BJ (cell line): ENCODE measurements at regions of chr12 and their contacts with region 1.

Region 1: DNA sequence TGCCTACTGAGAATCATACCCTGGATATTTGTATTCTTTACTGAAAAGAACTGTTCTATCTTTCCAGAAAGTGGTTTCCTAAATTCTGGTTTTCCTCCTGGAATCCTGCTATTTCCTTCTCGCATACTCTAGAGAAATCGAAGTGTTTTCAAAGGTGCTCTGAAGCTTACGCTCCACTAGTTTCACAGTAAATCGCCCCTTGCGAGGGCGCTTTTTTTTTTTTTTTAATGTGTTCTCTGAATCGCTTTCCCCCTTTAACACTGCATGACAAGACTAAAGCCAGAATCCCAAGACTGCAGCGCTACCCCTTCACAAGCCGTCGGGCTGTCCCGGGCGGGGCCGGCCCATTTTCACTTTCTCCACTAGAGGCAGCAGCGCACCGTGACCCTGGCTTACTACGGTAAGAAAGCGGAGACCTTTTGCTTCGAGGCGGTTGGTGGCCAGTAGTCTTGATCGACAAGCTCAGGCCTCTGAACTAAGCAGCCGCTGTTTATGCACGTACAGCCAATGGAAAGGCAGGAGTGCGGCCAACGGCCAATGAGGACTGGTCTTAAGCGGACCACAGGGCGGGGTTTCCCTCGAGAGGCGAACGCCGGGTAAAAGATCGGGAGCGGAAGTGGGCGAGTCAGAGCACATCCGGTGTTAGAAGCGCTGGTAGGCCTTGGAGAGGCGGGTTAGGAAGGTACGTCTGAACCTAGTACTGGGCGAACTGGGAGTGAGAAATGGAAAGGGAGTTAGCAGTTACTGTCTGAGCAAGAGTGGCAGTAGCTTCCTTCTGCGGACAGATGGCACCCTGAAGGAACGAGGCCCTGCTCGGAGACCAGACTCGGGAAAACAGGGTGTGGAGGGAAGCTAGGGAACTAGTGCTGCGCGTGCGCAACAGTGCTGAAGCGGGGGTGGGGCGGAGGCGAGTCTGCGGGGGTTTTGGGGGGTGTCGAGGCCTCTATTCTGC is at the start of gene TMBIM6:
- DNase-seq: peak; percentile 100
- H3K4me3 ChIP-seq: peak within 1 kb of the TSS; percentile 76
- H3K27me3 ChIP-seq: no peaks in the 10 kb centered on the region
- CTCF ChIP-seq: peak; percentile 96
- polyA plus RNA-seq, gene TMBIM6: 771 and 1,002 TPM in 2 replicates

Region 2: DNA sequence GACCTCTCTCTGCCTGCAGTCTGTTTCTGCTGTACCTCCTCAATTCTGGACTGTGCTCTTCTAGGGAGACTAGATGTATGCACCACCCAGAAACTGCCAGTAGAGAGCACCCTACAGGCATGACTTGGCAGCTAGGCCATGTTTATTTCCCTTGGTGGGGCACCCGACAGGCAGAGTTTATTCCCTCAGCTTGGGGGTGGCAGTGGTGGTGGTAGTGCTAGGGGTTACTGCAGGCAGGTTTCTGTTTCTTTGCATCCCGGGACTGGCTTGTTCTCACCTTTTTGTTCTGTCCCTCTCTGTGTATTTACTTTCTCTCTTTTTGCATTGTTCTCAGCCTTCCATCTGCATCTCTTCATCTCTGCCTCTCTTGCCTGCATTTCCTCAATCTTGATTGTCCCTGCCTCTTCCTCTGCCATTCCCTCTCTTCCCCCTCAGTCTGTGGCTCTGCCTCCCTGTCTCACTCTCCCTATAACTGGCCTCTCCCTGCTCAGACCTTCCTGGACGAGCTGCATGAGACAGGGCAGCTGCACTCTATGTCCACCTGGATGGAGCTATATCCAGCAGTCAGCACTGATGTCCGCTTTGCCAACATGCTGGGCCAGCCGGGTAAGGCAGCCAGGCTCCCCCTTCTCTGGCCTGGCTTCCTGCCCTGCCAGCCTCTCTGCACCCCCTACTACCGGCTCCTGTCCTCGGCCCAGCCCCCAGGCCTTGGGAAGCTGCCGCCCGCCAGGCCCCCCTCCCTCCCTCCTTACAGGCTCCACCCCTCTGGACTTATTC is 104.0 kb before region 1 on chr12:
- CTCF ChIA-PET with region 1: interaction called, 12 read pairs
- POLR2A ChIA-PET with region 1: no interaction called
- DNase-seq: no peak
- H3K4me3 ChIP-seq: no peak overlapping the region
- H3K27me3 ChIP-seq: no peaks in the 10 kb centered on the region
- CTCF ChIP-seq: peak; percentile 83

Region 3: DNA sequence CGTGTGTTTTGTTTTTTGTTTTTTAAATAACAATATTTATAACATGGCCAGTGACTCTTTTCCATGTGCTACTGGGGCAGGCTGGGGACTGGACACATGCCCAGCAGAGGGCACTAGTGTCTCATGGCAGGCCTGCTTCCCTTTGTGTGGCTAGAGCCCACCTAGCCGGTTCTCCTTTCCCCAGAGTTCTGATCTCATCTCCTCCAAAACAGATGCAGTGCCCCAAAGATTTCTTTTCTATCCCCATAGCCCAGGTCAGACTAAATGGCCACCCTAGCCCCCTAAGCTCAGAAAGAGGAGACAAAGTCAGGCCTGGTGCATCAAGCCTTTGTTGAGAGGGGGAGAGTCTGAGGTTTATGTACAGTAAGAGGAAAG is 96.6 kb before region 1 on chr12:
- CTCF ChIA-PET with region 1: interaction called, 14 read pairs
- POLR2A ChIA-PET with region 1: interaction called, 3 read pairs
- DNase-seq: no peak
- H3K4me3 ChIP-seq: no peak overlapping the region
- H3K27me3 ChIP-seq: no peaks in the 10 kb centered on the region
- CTCF ChIP-seq: peak; percentile 96

Region 4: DNA sequence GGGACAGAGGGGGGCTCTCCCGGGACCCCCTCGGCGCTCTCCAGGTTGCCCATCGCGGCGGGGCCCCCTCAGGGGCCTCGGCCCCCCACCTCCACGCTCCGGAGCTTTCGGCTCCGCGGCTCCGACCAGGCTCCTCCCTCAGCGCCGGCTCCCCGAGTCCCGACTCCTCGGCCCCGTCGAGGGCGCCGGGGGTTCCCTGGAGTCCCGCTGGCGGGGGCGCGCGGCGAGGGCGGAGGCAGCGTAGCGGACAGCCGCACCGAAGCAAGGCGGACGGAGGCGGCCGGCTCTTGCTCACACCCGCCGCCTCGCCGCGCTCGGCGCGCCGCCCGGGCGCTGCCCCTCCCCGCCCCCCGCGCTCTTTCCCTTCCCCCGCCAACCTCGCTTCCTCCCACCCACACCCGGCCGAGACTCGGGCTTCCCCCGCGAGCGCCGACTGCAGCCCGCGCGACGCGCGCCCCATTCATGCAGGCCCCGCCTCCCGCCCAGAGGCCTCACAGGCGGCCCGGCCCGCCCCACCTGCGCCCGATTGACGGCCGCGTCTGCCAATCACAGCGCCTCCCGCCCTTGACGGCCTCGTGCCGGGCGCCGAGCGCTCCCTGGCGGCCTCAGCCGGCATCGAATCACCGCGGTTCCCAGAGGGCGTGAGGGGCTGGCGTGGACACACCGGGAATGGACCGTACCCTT is 33.9 kb before region 1 on chr12 and contains the start of gene FMNL3:
- CTCF ChIA-PET with region 1: interaction called, 10 read pairs
- POLR2A ChIA-PET with region 1: no interaction called
- DNase-seq: peak; percentile 59
- H3K4me3 ChIP-seq: peak within 1 kb of the TSS; percentile 83
- H3K27me3 ChIP-seq: peaks cover 7% of the 10 kb centered on the region
- CTCF ChIP-seq: peak; percentile 91
- polyA plus RNA-seq, gene FMNL3: 10.6 and 13.3 TPM in 2 replicates

Region 5: DNA sequence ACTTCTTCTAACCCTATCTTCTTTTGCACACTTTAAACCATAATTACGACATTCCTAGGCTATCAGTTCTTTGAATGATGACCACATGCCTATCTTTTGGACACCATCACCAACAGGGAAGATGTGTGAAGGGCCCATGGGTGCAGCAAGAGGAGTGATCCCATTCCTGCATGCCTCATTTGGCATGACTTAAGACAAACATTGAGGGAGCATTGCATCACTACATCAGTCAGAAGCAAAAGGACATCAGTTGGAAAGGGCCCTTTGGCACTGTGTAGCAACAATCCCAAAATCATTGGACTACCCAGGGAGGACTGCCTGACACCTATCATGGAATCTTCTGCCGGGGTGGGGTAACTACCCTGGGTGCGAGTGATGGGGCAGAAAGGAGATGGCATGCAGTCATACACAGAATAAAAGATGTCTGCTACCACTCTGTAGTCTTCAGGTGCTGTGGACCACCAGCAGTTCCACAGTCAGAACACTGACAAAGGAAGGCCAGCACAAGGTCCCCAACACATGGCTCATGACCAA is 10.6 kb before region 1 on chr12:
- CTCF ChIA-PET with region 1: interaction called, 11 read pairs
- POLR2A ChIA-PET with region 1: no interaction called
- DNase-seq: no peak
- H3K4me3 ChIP-seq: no peak overlapping the region
- H3K27me3 ChIP-seq: peaks cover 2% of the 10 kb centered on the region
- CTCF ChIP-seq: no peak

Region 6: GRCh38 chr12:49794021-49794420 is 52.8 kb after region 1 on chr12:
- CTCF ChIA-PET with region 1: no interaction called
- POLR2A ChIA-PET with region 1: no interaction called
- DNase-seq: no peak
- H3K4me3 ChIP-seq: no peak overlapping the region
- H3K27me3 ChIP-seq: no peaks in the 10 kb centered on the region
- CTCF ChIP-seq: no peak

Region 7: DNA sequence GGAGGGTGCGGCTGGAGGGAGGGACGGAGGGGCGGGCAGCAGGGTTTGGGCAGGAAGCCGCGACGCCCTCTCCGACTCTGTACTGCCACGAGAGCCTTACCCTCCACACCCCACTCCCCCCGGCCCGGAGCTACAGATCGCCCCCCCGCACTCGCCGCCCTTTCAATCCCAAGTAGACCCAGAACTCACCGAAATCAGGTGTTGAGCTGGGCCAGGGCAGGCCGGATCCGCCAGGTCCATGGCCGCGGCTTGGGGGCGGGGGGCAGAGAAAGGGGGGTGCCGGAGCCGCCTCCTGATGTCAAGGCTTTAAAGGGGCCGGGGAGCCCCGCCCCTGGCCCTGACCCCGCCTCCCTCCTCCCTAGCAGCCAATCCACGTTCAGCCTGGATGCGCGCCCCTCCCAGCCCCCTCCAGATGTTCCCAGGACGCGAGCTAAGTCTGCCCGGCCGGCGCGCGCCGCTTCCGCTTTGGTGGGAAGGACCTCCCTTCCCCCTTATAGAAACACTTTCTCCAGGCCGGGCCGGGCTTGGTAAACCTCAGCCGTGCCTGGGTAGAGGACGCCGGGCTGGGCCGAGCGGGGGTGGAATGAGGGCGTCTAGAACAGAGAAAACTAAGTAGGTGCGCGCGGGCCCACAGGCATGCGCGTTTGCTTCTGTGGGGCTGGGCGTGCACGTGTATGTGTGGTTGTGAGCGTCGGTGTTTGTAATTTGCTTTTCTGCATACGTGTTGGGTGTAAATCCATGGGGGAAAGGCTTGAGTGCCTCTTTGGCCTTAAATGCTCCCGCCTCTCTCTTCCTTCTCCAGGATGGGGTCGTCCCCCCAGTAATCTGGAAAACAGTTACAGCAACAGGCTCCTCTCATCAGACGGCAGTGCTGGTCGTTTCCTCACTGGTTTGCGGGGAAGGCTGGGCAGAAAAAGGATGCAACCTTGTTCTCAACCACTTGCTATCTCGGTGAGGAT is 87.2 kb after region 1 on chr12 and contains the start of gene NCKAP5L:
- CTCF ChIA-PET with region 1: interaction called, 4 read pairs
- POLR2A ChIA-PET with region 1: interaction called, 22 read pairs
- DNase-seq: peak; percentile 74
- H3K4me3 ChIP-seq: peak within 1 kb of the TSS; percentile 92
- H3K27me3 ChIP-seq: no peaks in the 10 kb centered on the region
- CTCF ChIP-seq: no peak
- polyA plus RNA-seq, gene NCKAP5L: 7.3 and 13.2 TPM in 2 replicates